ENCODE measurements at regions of chr21 and their contacts with region 1.

Region 1: DNA sequence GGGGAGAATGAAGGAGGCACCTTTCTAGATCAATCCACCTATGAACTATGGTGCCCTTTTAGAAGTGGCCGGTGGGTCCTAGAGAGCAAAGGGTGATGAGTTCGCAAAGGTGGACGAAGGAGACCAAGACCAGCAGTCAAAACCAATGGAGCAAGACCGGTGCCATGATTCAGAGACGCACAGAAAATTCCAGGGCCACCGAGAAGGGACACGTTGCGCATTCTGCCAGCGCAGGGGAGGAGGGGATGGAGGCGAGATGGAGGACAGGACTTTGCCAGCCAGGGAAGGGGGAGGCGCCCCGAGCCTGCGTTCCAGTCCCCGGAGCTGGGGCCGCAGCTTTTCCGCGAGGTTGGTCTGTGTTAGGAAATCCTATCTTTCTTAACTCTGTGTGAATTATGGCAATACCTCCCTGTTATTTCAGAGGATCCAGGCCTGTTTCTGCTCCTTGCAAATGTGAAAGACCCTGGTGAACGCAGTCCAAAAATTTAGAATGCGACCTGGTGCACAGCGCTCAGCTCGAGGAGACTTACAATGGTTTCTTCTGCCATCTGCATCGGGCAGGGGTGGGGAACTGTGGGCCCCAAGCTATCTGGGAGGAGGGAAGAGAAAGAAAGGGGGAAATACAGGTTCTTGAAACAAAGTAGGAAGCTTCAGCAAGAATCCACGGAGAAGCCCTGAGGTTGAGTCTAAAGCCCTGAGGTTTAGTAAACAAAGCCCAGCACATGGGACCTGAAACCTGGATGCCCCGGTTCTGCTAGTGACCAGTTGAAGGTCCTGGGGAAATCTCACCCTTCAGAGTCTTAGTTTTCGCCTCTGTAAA is 129.4 kb downstream of the MRPS6 start:
- DNase-seq: no peak
- ATAC-seq: no peak
- H3K4me3 Mint-ChIP-seq: peak overlapping the region; percentile 73
- H3K27ac Mint-ChIP-seq: no peak overlapping the region
- H3K4me1 Mint-ChIP-seq: peaks cover 60% of the 10 kb centered on the region
- H3K27me3 Mint-ChIP-seq: no peaks in the 10 kb centered on the region

Region 2: GRCh38 chr21:34004974-34005373 is 197.8 kb before region 1 on chr21:
- CTCF ChIA-PET with region 1: no interaction called
- POLR2A ChIA-PET with region 1: no interaction called
- DNase-seq: no peak
- ATAC-seq: no peak
- H3K4me3 Mint-ChIP-seq: no peak overlapping the region
- H3K27ac Mint-ChIP-seq: no peak overlapping the region
- H3K4me1 Mint-ChIP-seq: peaks cover 14% of the 10 kb centered on the region
- H3K27me3 Mint-ChIP-seq: no peaks in the 10 kb centered on the region

Region 3: DNA sequence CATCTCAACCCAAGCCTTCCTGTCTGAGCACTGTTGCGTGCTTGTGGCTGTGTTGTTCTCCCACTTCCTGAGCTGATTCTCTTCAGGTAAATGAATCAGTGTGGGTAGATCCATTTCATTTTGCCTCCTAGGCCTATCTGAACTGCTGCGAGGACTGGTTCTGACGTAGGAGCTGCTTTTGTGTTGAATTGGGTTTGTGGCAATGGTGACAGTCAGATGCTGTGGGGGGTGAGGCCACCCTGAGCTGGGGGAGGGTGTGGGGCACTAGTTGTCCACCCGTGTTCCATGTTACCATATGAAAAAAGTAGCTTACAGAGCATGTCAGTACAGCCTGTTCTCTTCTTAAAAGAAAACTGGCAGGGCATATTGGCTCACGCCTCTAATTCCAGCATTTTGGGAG is 47.9 kb before region 1 on chr21:
- CTCF ChIA-PET with region 1: interaction called, 12 read pairs
- POLR2A ChIA-PET with region 1: interaction called, 17 read pairs
- DNase-seq: peak; percentile 79
- ATAC-seq: peak; percentile 88
- H3K4me3 Mint-ChIP-seq: peak overlapping the region; percentile 16
- H3K27ac Mint-ChIP-seq: peak overlapping the region; percentile 91
- H3K4me1 Mint-ChIP-seq: peaks cover 52% of the 10 kb centered on the region
- H3K27me3 Mint-ChIP-seq: no peaks in the 10 kb centered on the region